WTC11 (cell line): ENCODE measurements at regions of chr3 and their contacts with region 1.

Region 1: GRCh38 chr3:40292637-40293349 is 16.7 kb upstream of the EIF1B start:
- DNase-seq: peak; percentile 20
- ATAC-seq: peak; percentile 75
- H3K4me3 Mint-ChIP-seq: no peak overlapping the region
- H3K27ac Mint-ChIP-seq: peak overlapping the region; percentile 55
- H3K4me1 Mint-ChIP-seq: peaks cover 40% of the 10 kb centered on the region
- H3K27me3 Mint-ChIP-seq: no peaks in the 10 kb centered on the region
- CTCF ChIP-seq: no peak

Region 2: GRCh38 chr3:40309418-40309924 is 16.7 kb after region 1 on chr3 and contains the start of gene EIF1B:
- CTCF ChIA-PET with region 1: interaction called, 10 read pairs
- POLR2A ChIA-PET with region 1: interaction called, 5 read pairs
- DNase-seq: peak; percentile 98
- ATAC-seq: peak; percentile 95
- H3K4me3 Mint-ChIP-seq: peak within 1 kb of the TSS; percentile 97
- H3K27ac Mint-ChIP-seq: peak within 1 kb of the TSS; percentile 97
- H3K4me1 Mint-ChIP-seq: peaks cover 18% of the 10 kb centered on the region
- H3K27me3 Mint-ChIP-seq: no peaks in the 10 kb centered on the region
- CTCF ChIP-seq: peak; percentile 66; the same call in 1 of the 2 replicates
- total RNA-seq, gene EIF1B: 82.0 to 93.2 TPM (median 90.6 TPM) in 3 replicates

Region 3: GRCh38 chr3:40597441-40597840 is 304.6 kb after region 1 on chr3:
- CTCF ChIA-PET with region 1: no interaction called
- POLR2A ChIA-PET with region 1: no interaction called
- DNase-seq: no peak
- ATAC-seq: no peak
- H3K4me3 Mint-ChIP-seq: no peak overlapping the region
- H3K27ac Mint-ChIP-seq: no peak overlapping the region
- H3K4me1 Mint-ChIP-seq: no peaks in the 10 kb centered on the region
- H3K27me3 Mint-ChIP-seq: no peaks in the 10 kb centered on the region
- CTCF ChIP-seq: no peak